ENCODE measurements at regions of chr22 and their contacts with region 1.

Region 1: GRCh38 chr22:38181453-38182247 is at the start of gene PLA2G6:
- DNase-seq: peak; percentile 99
- H3K4me3 ChIP-seq: peak within 1 kb of the TSS; percentile 43 to 51 (median 44)
- H3K27ac ChIP-seq: peak within 1 kb of the TSS; percentile 95
- H3K4me1 ChIP-seq: peaks cover 33% of the 10 kb centered on the region
- H3K27me3 ChIP-seq: no peaks in the 10 kb centered on the region
- CTCF ChIP-seq: no peak
- total RNA-seq, gene PLA2G6: 12.8 to 20.2 TPM

Region 2: GRCh38 chr22:38114484-38115398 is 66.9 kb before region 1 on chr22:
- CTCF ChIA-PET with region 1: no interaction called
- dilution Hi-C with region 1: no loop called
- in situ Hi-C with region 1: no loop called
- intact Hi-C with region 1: loop called (anchors 1 kb)
- DNase-seq: peak; percentile 67
- H3K4me3 ChIP-seq: no peak overlapping the region
- H3K27ac ChIP-seq: no peak overlapping the region
- H3K4me1 ChIP-seq: peaks cover 7% of the 10 kb centered on the region
- H3K27me3 ChIP-seq: no peaks in the 10 kb centered on the region
- CTCF ChIP-seq: peak; percentile 96 to 98

Region 3: DNA sequence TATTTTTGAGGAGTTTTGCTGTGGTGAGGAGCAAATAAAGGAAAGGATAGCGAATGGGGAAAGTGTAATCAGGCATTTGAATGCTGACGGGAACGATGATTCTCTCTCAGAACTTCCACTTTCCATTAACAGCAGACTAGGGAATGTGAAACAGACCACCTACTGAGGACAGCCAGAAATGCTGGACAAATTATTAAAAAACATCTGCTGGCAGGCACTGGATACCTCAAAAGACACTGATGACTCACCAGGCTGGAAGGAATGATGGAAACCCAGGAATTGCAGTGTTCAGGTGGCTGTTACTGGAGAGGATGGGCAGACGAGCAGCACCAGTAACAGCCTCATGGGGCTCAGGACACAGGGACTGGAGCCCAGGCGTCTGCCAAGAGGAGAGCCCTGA is 33.4 kb before region 1 on chr22:
- CTCF ChIA-PET with region 1: no interaction called
- dilution Hi-C with region 1: no loop called
- in situ Hi-C with region 1: no loop called
- intact Hi-C with region 1: loop called (anchors 2 kb)
- DNase-seq: peak; percentile 70
- H3K4me3 ChIP-seq: no peak overlapping the region
- H3K27ac ChIP-seq: peak overlapping the region; percentile 19
- H3K4me1 ChIP-seq: peaks cover 26% of the 10 kb centered on the region
- H3K27me3 ChIP-seq: no peaks in the 10 kb centered on the region
- CTCF ChIP-seq: no peak

Region 4: DNA sequence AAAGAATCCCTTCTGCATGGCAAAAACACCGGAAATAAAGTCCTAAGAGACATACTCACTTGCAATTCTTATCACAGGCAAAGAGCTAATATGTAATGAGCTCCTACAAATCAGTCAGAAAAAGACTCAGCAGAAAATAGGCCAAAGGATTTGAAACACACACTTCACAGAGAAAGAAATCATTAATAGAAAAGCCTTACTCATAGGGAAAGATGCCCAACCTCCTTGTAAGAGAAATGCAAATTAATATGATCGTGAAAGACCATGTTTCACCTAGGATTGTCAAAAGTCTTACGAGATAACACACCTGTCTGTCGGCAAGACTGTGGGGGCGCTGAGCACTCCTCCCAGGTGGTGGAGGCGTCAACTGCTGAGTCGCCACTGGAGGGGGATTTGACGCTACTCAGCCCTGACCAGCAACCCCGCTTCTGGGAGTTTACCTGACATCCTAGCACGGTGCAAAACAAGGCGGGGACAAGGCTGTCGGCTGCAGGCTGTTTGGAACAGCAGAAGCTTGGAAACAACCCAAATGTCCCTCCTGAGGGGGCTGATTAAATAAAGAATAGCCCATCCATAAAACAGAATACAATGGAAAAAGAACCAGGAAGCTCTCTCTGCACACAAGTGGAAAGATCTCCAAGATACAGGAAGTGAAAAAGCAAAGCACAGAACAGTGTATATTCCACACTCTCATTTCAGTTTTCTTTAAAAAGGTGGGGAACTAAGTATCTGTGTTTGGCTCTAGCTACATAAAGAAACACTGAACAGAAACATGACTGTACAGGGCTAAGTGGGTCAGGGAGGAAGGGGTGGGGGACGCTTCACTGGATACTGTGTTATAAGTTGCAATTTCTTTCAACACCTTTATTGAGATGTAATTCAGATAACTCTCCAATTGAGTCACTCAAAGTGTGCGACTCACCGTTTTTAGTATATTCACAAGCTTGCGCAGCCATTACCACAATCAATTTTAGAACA is 124.1 kb after region 1 on chr22:
- CTCF ChIA-PET with region 1: no interaction called
- dilution Hi-C with region 1: loop called (anchors 10 kb)
- in situ Hi-C with region 1: no loop called
- intact Hi-C with region 1: no loop called
- DNase-seq: peak; percentile 63
- H3K4me3 ChIP-seq: no peak overlapping the region
- H3K27ac ChIP-seq: peak overlapping the region; percentile 85
- H3K4me1 ChIP-seq: peaks cover 53% of the 10 kb centered on the region
- H3K27me3 ChIP-seq: no peaks in the 10 kb centered on the region
- CTCF ChIP-seq: peak in 1 of 2 donors; percentile 27

Measured in mammary epithelial cell (primary cell).